Activated naive CD4-positive, alpha-beta T cell treated with anti-CD3 and anti-CD28 coated beads for 36 hours (primary cell): ENCODE measurements at regions of chr12 and their contacts with region 1.

Region 1: DNA sequence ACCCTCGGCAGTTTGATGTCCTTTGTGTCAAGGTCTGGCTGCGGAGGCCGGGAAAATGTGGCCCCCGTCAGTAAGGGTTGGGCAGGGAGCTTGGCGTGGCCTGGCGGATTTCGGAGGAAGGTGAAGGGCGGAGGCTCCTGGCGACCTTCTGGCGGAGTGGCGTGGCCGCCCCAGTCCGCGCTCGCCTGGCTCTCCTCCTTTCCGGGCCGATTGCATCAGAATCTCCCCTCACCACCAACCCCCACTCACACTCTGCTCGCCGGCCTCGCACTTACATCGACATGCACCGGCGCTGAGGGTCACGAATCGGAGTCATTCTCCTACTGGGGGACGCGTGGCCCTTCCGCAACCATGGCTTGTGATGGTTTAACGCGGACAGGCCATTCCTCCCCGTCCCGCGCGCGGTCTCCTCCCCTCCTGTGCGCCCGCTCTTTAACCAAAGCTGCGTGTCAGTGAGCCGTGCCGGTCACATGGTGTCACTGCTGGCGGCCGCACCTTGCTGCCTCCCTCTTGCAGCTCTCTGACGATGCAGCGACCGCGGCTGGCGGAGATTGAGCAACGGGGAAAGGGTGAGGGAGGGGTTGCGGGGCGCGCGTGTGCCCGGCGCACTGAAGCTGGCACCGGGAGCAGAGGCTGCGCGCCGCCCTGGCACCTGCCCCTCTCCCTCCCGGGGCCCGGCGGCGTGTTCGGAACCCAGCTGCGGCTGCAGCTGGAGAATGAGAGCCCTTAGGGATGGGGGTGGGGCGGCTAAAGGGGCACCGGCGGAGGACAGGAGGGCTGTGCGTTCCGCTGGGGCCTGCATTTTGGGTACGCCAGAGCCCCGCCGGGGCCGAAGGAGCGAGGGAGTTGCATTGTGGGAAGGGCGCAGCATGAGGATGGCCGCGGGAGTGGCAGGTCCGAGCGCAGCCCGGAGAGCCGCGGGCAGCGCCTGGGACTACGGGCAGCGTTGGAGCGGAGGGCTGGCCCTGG is at the start of gene SLC38A1:
- DNase-seq: peak; percentile 92
- H3K4me3 Mint-ChIP-seq: no peak within 1 kb of the TSS
- H3K27ac Mint-ChIP-seq: no peak within 1 kb of the TSS
- H3K4me1 Mint-ChIP-seq: peaks cover 34% of the 10 kb centered on the region
- H3K27me3 Mint-ChIP-seq: no peaks in the 10 kb centered on the region
- total RNA-seq, gene SLC38A1: 105 to 110 TPM

Region 2: GRCh38 chr12:45878630-45879255 is 390.1 kb before region 1 on chr12:
- CTCF ChIA-PET with region 1: no interaction called
- intact Hi-C with region 1: no loop called
- DNase-seq: no peak
- H3K4me3 Mint-ChIP-seq: no peak overlapping the region
- H3K27ac Mint-ChIP-seq: no peak overlapping the region
- H3K4me1 Mint-ChIP-seq: peaks cover 28% of the 10 kb centered on the region
- H3K27me3 Mint-ChIP-seq: no peaks in the 10 kb centered on the region

Region 3: GRCh38 chr12:46217541-46218321 is 51.1 kb before region 1 on chr12:
- CTCF ChIA-PET with region 1: interaction called, 7 read pairs
- intact Hi-C with region 1: loop called (anchors 1 kb)
- DNase-seq: peak; percentile 74
- H3K4me3 Mint-ChIP-seq: peak overlapping the region; percentile 33
- H3K27ac Mint-ChIP-seq: peak overlapping the region; percentile 100
- H3K4me1 Mint-ChIP-seq: peaks cover 95% of the 10 kb centered on the region
- H3K27me3 Mint-ChIP-seq: no peaks in the 10 kb centered on the region

Region 4: GRCh38 chr12:46342562-46343033 is 73.7 kb after region 1 on chr12:
- CTCF ChIA-PET with region 1: no interaction called
- intact Hi-C with region 1: no loop called
- DNase-seq: peak; percentile 48
- H3K4me3 Mint-ChIP-seq: no peak overlapping the region
- H3K27ac Mint-ChIP-seq: no peak overlapping the region
- H3K4me1 Mint-ChIP-seq: peaks cover 5% of the 10 kb centered on the region
- H3K27me3 Mint-ChIP-seq: no peaks in the 10 kb centered on the region

Region 5: GRCh38 chr12:46430340-46430948 is 161.6 kb after region 1 on chr12:
- CTCF ChIA-PET with region 1: no interaction called
- intact Hi-C with region 1: loop called (anchors 1 kb)
- DNase-seq: peak; percentile 64
- H3K4me3 Mint-ChIP-seq: peak overlapping the region; percentile 53
- H3K27ac Mint-ChIP-seq: peak overlapping the region; percentile 82
- H3K4me1 Mint-ChIP-seq: peaks cover 30% of the 10 kb centered on the region
- H3K27me3 Mint-ChIP-seq: no peaks in the 10 kb centered on the region

Region 6: GRCh38 chr12:46546634-46547286 is 277.9 kb after region 1 on chr12:
- CTCF ChIA-PET with region 1: no interaction called
- intact Hi-C with region 1: loop called (anchors 2 kb)
- DNase-seq: peak; percentile 45
- H3K4me3 Mint-ChIP-seq: no peak overlapping the region
- H3K27ac Mint-ChIP-seq: peak overlapping the region; percentile 74
- H3K4me1 Mint-ChIP-seq: peaks cover 58% of the 10 kb centered on the region
- H3K27me3 Mint-ChIP-seq: no peaks in the 10 kb centered on the region

Region 7: GRCh38 chr12:47207340-47207717 is 938.5 kb after region 1 on chr12:
- CTCF ChIA-PET with region 1: no interaction called
- intact Hi-C with region 1: loop called (anchors 5 kb)
- DNase-seq: peak; percentile 81
- H3K4me3 Mint-ChIP-seq: peak overlapping the region; percentile 94
- H3K27ac Mint-ChIP-seq: peak overlapping the region; percentile 100
- H3K4me1 Mint-ChIP-seq: peaks cover 71% of the 10 kb centered on the region
- H3K27me3 Mint-ChIP-seq: no peaks in the 10 kb centered on the region